ENCODE measurements at regions of chr3 and their contacts with region 1.

Region 1: DNA sequence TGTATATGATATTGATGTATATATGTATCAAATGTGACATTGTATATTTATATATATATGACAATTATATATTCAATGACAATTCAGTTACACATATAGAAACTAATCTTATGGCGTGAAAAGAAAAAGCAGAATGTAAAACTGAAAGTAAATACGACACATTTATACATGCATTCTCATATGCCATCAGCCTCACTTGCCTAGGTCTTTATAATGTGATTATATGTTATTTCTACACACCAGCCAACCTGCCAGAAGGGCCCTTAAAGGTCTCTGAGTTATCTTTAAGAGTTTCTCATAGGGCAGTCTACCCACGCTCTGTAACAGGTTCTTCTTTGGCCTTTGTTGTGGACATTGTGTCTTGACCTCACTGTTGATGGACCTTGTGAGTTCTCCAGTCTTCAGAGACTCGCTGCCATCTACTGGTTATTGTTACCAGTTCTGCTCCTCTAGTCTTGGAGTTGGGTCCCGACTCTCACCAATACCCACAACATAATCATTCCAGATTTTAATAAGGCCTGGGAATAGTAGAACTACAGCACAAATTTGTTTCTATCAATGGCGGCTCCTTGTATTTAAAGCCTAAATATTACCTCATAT is 371.5 kb upstream of the GOLIM4 start:
- DNase-seq: no peak
- ATAC-seq: peak; percentile 76 to 98 (median 90)
- H3K4me3 ChIP-seq: no peak overlapping the region
- H3K27ac ChIP-seq: no peak overlapping the region
- H3K4me1 ChIP-seq: no peaks in the 10 kb centered on the region
- H3K27me3 ChIP-seq: no peaks in the 10 kb centered on the region
- CTCF ChIP-seq: peak; percentile 38 to 45 (median 40)
- POLR2A ChIP-seq: no peak

Region 2: GRCh38 chr3:168501570-168501969 is 34.4 kb after region 1 on chr3:
- intact Hi-C with region 1: no loop called
- DNase-seq: no peak
- ATAC-seq: no peak
- H3K4me3 ChIP-seq: no peak overlapping the region
- H3K27ac ChIP-seq: no peak overlapping the region
- H3K4me1 ChIP-seq: no peaks in the 10 kb centered on the region
- H3K27me3 ChIP-seq: no peaks in the 10 kb centered on the region
- CTCF ChIP-seq: no peak
- POLR2A ChIP-seq: no peak

Region 3: GRCh38 chr3:168545591-168545990 is 78.4 kb after region 1 on chr3:
- intact Hi-C with region 1: loop called in 1 of 2 experiments (anchors 10 kb)
- DNase-seq: peak in 1 of 3 donors; percentile 57
- ATAC-seq: peak in 3 of 4 donors; percentile 41 to 99 (median 84)
- H3K4me3 ChIP-seq: no peak overlapping the region
- H3K27ac ChIP-seq: no peak overlapping the region
- H3K4me1 ChIP-seq: no peaks in the 10 kb centered on the region
- H3K27me3 ChIP-seq: no peaks in the 10 kb centered on the region
- CTCF ChIP-seq: no peak
- POLR2A ChIP-seq: no peak